ENCODE measurements at regions of chr1 and their contacts with region 1.

Region 1: DNA sequence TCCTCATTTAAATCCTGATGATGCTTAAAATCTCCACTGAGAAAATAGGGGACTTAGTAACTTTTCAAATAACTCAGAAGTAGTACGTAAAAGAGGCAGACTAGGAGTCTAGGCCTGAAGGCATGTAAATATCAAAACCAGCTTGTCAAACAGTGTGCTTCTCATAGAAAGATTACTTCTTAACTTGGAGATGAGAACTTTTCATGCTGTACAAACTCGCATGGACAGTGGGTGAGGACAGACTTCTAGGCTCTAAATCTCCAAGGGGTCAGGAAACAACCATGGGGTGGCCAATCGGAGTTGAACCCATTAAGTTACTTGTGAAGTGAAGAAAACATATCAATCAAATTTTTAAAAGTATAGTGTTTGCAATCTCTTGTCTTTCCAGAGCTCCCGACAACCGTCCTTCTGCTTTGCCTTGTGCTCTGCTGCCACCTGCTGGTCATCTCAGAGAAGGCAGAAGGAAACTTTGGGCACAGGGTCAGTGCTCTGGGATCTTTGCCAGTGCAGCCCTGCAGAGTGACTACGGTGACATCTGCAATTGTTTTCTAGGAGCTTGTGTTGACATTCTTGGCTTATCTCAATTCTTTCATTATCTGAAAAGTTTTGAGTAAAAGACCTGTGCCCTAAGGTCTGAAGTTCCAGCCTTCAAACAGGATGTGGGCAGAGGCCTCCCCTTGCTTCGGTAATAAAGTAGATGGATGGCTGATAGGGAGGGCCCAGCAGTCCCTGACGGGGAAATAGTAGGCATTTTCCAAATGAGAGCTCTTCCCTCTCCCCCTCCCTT is 105.1 kb upstream of the PDE4B start:
- DNase-seq: peak; percentile 60
- H3K4me3 Mint-ChIP-seq: no peak overlapping the region
- H3K27ac Mint-ChIP-seq: no peak overlapping the region
- H3K4me1 Mint-ChIP-seq: peaks cover 11% of the 10 kb centered on the region
- H3K27me3 Mint-ChIP-seq: peaks cover 24% of the 10 kb centered on the region

Region 2: GRCh38 chr1:64686828-64687724 is 1000.5 kb before region 1 on chr1:
- intact Hi-C with region 1: loop called (anchors 10 kb)
- DNase-seq: no peak
- H3K4me3 Mint-ChIP-seq: no peak overlapping the region
- H3K27ac Mint-ChIP-seq: no peak overlapping the region
- H3K4me1 Mint-ChIP-seq: peaks cover 7% of the 10 kb centered on the region
- H3K27me3 Mint-ChIP-seq: no peaks in the 10 kb centered on the region

Region 3: DNA sequence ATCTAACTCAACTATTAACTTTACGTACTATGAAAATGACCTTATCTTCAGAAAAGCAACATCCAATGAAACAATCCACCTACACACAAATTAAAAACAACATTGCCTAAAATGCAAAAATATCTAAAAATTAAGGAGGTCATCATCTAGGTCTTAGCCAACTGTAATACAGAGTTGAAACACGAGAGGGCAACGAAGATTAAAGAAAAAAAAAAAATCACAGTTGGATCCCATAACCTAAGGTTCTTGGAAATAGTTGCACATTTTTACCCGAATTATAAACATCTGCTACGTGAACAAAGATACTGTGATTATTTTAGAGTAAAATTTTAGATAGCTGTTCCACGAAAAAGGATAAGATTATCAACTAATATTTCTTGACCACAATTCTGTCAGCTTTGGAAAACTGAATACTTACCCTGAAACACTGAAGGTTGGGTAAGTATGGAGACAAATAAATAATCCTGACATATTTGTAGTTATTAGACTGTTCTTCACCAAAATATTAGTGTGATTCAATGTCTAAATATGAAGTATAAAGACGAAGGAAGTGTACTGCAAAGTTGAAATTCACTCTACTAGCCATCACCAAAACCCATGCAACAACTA is 627.6 kb before region 1 on chr1:
- intact Hi-C with region 1: loop called (anchors 5 kb)
- DNase-seq: no peak
- H3K4me3 Mint-ChIP-seq: no peak overlapping the region
- H3K27ac Mint-ChIP-seq: no peak overlapping the region
- H3K4me1 Mint-ChIP-seq: peaks cover 6% of the 10 kb centered on the region
- H3K27me3 Mint-ChIP-seq: no peaks in the 10 kb centered on the region

Region 4: DNA sequence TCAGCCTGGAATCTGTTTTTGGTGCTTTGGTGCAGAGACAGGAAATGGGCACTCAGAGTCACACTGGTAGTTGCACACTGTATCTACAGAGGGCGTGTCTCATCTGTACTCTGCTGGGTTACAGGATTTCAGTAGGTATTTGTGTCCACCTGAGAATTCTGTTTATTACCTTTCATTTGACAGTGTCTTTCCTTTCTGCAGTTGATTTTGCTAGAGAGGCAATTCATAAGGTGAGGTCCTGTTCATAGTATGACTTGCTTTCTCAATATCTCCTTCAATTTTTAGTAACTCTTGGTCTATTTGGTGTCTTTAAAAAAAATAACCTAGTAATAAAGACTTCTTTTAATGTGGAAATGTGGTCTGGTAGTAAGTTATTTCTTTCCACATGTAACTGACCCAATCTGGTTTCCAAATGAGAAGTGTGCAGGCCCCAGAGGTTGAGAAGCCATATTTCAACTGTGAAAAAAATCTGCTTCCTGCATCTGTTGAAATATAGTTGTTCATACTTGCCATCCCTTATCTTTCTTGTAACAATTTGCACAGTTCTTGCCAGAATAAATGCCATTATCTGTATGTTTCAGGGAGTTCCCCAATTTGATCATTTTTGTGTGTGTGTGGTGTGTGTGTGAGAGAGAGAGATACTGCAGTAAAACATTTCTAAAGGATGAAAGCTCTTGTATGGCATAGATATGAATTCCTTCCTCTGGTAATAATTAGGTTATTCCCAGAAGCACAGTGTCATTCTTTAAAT is 456.7 kb before region 1 on chr1:
- intact Hi-C with region 1: loop called (anchors 1 kb)
- DNase-seq: no peak
- H3K4me3 Mint-ChIP-seq: peak overlapping the region; percentile 26
- H3K27ac Mint-ChIP-seq: peak overlapping the region; percentile 79
- H3K4me1 Mint-ChIP-seq: peaks cover 34% of the 10 kb centered on the region
- H3K27me3 Mint-ChIP-seq: no peaks in the 10 kb centered on the region

Region 5: GRCh38 chr1:65431111-65431705 is 256.4 kb before region 1 on chr1:
- intact Hi-C with region 1: loop called (anchors 2 kb)
- DNase-seq: no peak
- H3K4me3 Mint-ChIP-seq: no peak overlapping the region
- H3K27ac Mint-ChIP-seq: no peak overlapping the region
- H3K4me1 Mint-ChIP-seq: peaks cover 18% of the 10 kb centered on the region
- H3K27me3 Mint-ChIP-seq: no peaks in the 10 kb centered on the region

Measured in activated T-helper 2 cell treated with anti-CD3 and anti-CD28 coated beads, Interferon-gamma antibody, Interleukin-2, Interleukin-4, amounts not matched to agents 10 μg/mL and 5 μg/mL and 100 μg/mL, durations not matched to agents 14 hours and 24 hours and 36 hours (primary cell).